ENCODE measurements at regions of chrX and their contacts with region 1.

Region 1: DNA sequence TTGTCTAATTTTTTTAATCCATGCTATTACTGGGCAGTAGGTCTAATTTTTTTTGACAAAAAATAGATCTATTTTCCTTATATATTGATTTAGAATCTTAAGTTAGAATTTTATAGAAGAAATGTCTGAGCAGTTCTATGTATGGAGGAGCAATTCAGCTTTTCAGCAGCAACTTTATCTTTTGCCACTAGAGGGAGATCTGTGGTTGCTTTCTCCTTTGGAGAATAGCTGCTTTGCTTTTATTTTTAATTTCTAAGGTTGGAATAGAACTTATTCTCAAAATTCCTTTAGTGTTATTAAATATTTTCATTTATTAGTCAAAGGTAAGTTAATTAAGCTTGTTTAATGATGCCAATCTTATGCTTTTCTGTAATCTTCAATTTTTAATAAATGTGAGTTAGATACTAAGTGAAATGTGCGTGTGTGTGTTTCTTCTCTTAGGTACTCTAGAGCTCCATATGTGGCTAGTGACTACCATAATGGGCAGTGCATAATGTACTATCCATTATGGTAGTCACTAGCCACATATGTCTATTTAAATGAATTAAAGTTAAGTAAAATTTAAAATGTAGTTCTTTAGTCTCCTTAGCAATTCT is 29.3 kb downstream of the FAM199X start:
- DNase-seq: no peak
- H3K4me3 Mint-ChIP-seq: no peak overlapping the region
- H3K27ac Mint-ChIP-seq: no peak overlapping the region
- H3K4me1 Mint-ChIP-seq: no peaks in the 10 kb centered on the region
- H3K27me3 Mint-ChIP-seq: no peaks in the 10 kb centered on the region

Region 2: GRCh38 chrX:103845165-103845653 is 350.4 kb before region 1 on chrX:
- CTCF ChIA-PET with region 1: no interaction called
- POLR2A ChIA-PET with region 1: no interaction called
- DNase-seq: peak; percentile 47
- H3K4me3 Mint-ChIP-seq: no peak overlapping the region
- H3K27ac Mint-ChIP-seq: no peak overlapping the region
- H3K4me1 Mint-ChIP-seq: peaks cover 2% of the 10 kb centered on the region
- H3K27me3 Mint-ChIP-seq: no peaks in the 10 kb centered on the region

Region 3: DNA sequence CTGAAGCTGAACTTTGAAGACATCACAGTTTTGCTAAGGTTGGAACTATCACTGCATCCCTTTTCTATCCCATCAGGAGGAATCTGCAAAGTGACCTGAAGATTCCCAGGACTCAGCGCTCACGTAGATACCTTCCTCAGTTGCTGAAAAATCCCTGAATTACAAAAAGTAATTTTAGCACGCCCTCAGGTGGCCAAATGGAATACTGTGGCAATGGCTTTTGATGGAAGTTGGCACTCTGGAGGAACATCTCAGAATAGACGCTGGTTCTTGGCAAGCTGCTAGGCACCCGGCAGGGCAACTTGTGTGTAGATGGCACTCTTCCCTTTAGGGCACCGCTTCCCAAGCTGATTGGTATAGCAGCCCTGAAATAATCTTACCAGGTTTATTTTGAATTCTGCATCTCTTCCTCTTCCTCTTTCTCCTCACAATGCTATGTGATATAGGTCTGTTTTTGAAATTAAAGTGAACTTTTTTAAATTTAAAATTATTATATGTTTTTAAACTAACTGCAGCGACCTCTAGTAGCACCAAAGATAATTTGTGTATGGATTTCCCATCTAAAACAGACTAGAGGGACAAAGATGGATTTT is 75.4 kb after region 1 on chrX:
- CTCF ChIA-PET with region 1: interaction called, 10 read pairs
- POLR2A ChIA-PET with region 1: no interaction called
- DNase-seq: peak; percentile 29
- H3K4me3 Mint-ChIP-seq: no peak overlapping the region
- H3K27ac Mint-ChIP-seq: no peak overlapping the region
- H3K4me1 Mint-ChIP-seq: no peaks in the 10 kb centered on the region
- H3K27me3 Mint-ChIP-seq: peaks cover 9% of the 10 kb centered on the region

Measured in activated CD4-positive, alpha-beta memory T cell treated with anti-CD3 and anti-CD28 coated beads, Interleukin-2, amount 10 ng/mL, durations not matched to agents 7 days and 5 days (primary cell).